IMR-90 (cell line): ENCODE measurements at regions of chr2 and their contacts with region 1.

Region 1: GRCh38 chr2:133780099-133780839 is 212.0 kb upstream of the NCKAP5 start:
- DNase-seq: peak; percentile 86
- ATAC-seq: peak; percentile 94
- H3K4me3 ChIP-seq: no peak overlapping the region
- H3K27ac ChIP-seq: no peak overlapping the region
- H3K4me1 ChIP-seq: 0 out of 2 replicates have a peak, but pooled peaks cover 2% of the 10 kb centered on the region
- H3K27me3 ChIP-seq: no peaks in the 10 kb centered on the region
- CTCF ChIP-seq: peak; percentile 84
- POLR2A ChIP-seq: no peak
- RAD21 ChIP-seq: peak; percentile 86

Region 2: DNA sequence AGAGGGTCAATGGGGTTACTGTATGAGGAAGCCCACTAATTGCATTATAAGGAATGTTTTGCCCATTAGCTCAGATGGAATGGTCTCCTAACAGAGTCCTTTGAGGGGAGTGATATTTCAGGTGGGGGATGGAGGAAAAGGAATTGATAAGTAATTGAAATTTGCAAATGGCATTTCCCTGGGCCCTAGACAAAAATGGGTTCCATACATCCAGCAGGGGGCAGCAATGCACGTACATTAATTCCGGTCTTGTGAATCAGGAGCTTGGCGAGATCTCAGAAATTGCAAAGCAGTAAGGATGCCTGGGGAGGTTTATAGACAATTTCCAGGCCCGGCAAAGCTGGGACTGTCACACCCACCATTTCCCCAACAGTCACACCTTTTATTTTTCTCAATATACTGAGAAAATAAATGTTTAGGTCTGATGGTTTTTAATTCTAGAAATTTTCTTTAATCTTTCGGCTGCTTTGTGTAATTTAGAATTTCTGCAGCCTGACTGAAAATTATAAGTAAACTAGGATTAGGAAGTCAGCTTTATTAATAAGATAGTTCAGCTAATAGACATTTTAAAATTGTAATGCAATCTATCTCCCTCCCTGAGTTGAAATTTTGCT is 1233.1 kb before region 1 on chr2:
- CTCF ChIA-PET with region 1: no interaction called
- POLR2A ChIA-PET with region 1: no interaction called
- dilution Hi-C with region 1: no loop called
- in situ Hi-C with region 1: no loop called
- intact Hi-C with region 1: loop called (anchors 5 kb)
- DNase-seq: peak; percentile 85
- ATAC-seq: peak; percentile 67
- H3K4me3 ChIP-seq: no peak overlapping the region
- H3K27ac ChIP-seq: no peak overlapping the region
- H3K4me1 ChIP-seq: peaks cover 3% of the 10 kb centered on the region
- H3K27me3 ChIP-seq: no peaks in the 10 kb centered on the region
- CTCF ChIP-seq: peak; percentile 78
- POLR2A ChIP-seq: no peak
- RAD21 ChIP-seq: peak; percentile 85

Region 3: DNA sequence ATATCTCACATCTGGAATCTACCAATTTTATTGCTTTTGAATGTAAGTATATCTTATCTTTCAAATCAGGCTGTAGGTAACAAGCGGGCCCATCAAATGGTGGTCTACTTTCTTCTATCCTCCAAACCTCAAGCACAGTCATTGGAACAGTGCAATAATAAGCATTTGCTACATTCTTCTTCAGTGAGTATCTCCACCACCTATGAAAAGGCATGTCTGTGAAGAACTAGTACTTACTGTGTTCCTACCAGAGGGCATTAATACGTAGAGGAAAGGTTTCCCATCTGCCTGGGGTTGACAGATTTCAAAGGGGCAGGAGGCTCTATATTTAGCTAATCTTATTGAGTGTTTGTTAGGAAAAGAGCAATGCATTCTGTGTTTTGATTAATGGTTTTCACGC is 623.1 kb before region 1 on chr2:
- CTCF ChIA-PET with region 1: no interaction called
- POLR2A ChIA-PET with region 1: no interaction called
- dilution Hi-C with region 1: no loop called
- in situ Hi-C with region 1: no loop called
- intact Hi-C with region 1: no loop called
- DNase-seq: peak; percentile 37
- ATAC-seq: no peak
- H3K4me3 ChIP-seq: no peak overlapping the region
- H3K27ac ChIP-seq: no peak overlapping the region
- H3K4me1 ChIP-seq: no peaks in the 10 kb centered on the region
- H3K27me3 ChIP-seq: no peaks in the 10 kb centered on the region
- CTCF ChIP-seq: 0 out of 2 replicates have a peak, but pooled peaks have one; percentile 13
- POLR2A ChIP-seq: no peak
- RAD21 ChIP-seq: peak; percentile 16; the same call in 1 of the 2 replicates

Region 4: DNA sequence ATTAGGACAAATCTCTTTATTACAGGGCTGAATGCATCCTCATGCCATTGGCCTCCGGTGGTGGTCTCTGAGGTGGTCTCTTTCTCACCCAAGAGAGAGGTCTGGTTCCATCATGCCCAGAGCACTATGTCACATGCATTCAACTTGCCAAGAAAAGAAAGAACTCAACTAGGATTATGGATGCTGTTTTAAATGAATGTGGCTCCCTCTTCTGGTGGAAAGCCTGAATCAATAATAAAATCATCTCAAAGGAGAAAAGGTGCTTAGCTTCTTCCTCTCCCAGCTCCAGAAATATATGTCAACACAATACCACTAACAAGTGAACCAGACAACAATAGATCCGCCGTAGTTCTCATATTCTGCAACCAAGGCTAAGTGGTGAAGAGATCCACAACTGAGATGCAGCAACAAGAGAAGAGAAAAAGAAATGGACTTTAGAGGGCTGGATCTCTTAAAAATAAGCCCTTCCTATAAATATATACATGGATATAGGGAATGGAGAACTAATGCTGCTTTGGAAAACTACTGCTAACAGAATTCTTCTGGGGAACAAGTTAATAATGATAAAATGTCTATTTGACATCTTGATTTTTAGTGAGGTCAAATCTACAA is 608.8 kb before region 1 on chr2:
- CTCF ChIA-PET with region 1: no interaction called
- POLR2A ChIA-PET with region 1: no interaction called
- dilution Hi-C with region 1: no loop called
- in situ Hi-C with region 1: no loop called
- intact Hi-C with region 1: loop called (anchors 5 kb)
- DNase-seq: peak; percentile 74
- ATAC-seq: peak; percentile 64
- H3K4me3 ChIP-seq: no peak overlapping the region
- H3K27ac ChIP-seq: no peak overlapping the region
- H3K4me1 ChIP-seq: peaks cover 11% of the 10 kb centered on the region
- H3K27me3 ChIP-seq: no peaks in the 10 kb centered on the region
- CTCF ChIP-seq: peak; percentile 80
- POLR2A ChIP-seq: no peak
- RAD21 ChIP-seq: peak; percentile 87

Region 5: DNA sequence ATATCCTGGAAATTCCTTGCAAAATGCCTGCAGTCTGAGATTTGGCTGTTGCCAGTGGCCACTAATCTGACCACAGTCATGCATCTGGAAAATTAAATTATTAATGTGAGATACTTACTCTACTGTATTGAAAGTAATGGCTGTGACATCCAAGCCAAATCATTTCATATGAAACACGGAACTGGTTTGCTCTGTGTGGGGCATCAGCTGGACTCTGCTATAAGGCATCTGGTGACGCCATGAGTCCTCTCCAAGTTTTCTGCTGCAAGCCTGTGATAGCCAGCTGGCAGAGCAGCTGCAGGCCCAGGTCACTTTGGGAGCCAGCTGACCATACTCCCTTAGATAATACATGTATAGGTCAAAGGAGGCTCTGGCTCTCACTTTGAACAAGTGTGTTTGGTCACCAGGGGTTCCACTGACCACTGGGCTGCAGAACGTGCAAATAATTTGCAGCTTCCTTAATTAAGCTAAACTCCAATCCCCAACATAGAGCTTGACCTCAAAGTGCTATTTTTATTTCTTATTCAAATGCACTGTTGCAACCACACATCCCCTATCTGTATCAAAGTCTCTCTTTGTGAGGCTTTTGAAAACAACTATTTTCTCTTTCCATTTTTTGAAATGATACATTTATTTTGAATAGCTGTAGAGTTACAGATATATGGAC is 364.9 kb before region 1 on chr2:
- CTCF ChIA-PET with region 1: no interaction called
- POLR2A ChIA-PET with region 1: no interaction called
- dilution Hi-C with region 1: no loop called
- in situ Hi-C with region 1: no loop called
- intact Hi-C with region 1: loop called (anchors 10 kb)
- DNase-seq: no peak
- ATAC-seq: no peak
- H3K4me3 ChIP-seq: no peak overlapping the region
- H3K27ac ChIP-seq: no peak overlapping the region
- H3K4me1 ChIP-seq: peaks cover 10% of the 10 kb centered on the region
- H3K27me3 ChIP-seq: no peaks in the 10 kb centered on the region
- CTCF ChIP-seq: no peak
- POLR2A ChIP-seq: no peak
- RAD21 ChIP-seq: no peak

Region 6: GRCh38 chr2:133568172-133568571 is 212.1 kb before region 1 on chr2 and contains the start of gene NCKAP5:
- CTCF ChIA-PET with region 1: interaction called, 7 read pairs
- POLR2A ChIA-PET with region 1: no interaction called
- dilution Hi-C with region 1: no loop called
- in situ Hi-C with region 1: loop called (anchors 5 kb)
- intact Hi-C with region 1: loop called (anchors 2 kb)
- DNase-seq: peak; percentile 82
- ATAC-seq: peak; percentile 67
- H3K4me3 ChIP-seq: peak within 1 kb of the TSS; percentile 50
- H3K27ac ChIP-seq: peak within 1 kb of the TSS; percentile 84
- H3K4me1 ChIP-seq: peaks cover 15% of the 10 kb centered on the region
- H3K27me3 ChIP-seq: no peaks in the 10 kb centered on the region
- CTCF ChIP-seq: peak; percentile 24; the same call in 1 of the 2 replicates
- POLR2A ChIP-seq: no peak
- RAD21 ChIP-seq: peak; percentile 23
- total RNA-seq, gene NCKAP5: 3.9 and 5.3 TPM in 2 replicates

Region 7: DNA sequence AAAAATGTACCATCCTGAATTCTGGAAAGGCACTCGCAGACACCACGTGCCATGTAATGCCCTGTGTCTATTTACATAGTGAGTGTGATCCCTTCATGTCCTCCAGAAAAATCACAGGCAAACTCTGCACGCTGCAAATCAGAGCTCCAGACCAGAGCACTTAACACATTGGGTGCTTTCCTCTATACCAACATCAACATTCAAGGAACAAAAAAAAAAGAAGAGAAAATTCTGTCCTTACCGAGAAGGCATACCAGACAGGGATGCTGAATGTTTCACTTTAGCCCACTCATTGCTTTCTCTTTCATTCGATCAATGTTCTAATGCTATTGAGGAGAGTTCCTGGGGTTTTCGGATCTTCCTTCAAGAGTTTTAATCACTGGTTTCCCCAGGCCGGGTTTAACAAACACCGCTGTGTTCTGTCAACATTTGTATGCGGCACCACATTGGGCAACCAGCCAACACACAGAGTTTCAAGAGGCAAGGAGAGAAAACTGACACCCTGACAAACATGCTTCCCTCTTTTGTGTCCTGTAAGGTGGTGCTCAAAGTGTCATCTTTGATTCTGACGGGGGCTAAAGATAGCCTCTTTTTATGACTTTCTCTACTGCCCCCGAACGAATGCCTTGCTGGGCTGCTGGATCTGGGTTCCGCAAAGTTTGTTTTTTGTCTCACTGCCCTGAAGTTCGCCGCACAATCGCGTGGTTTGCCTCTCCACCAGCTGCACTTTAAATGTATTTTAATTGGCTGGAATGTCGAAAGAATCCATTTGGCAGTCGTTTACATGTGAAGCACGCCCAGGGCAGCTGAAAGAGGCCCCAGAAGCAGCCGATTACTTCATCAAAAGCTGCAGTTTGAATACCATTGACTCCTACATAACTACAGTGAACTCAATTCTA is 105.6 kb before region 1 on chr2:
- CTCF ChIA-PET with region 1: no interaction called
- POLR2A ChIA-PET with region 1: no interaction called
- dilution Hi-C with region 1: no loop called
- in situ Hi-C with region 1: no loop called
- intact Hi-C with region 1: loop called (anchors 1 kb)
- DNase-seq: peak; percentile 90
- ATAC-seq: peak; percentile 82
- H3K4me3 ChIP-seq: peak overlapping the region; percentile 41
- H3K27ac ChIP-seq: peak overlapping the region; percentile 96
- H3K4me1 ChIP-seq: peaks cover 20% of the 10 kb centered on the region
- H3K27me3 ChIP-seq: no peaks in the 10 kb centered on the region
- CTCF ChIP-seq: no peak
- POLR2A ChIP-seq: no peak
- RAD21 ChIP-seq: no peak